HepG2 (cell line): ENCODE measurements at regions of chr2 and their contacts with region 1.

Region 1: DNA sequence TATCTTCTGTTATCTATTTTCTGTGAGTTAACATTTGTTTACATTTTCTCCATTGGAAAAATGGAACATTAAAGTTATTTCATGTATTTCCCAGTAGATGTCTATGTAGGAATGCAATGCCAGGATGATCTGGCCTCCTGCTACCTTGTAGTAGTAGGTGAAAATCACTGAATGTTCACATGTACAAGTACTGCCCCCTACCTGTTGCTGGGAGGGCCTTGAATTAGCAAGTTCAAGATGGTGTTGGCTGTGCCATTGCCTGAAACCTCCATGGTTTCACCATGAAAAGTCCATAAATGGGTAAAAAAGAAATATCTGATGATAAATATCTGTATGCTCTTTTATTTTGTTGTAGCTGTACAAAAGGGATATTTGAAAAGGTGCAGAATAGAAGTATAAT is 30.7 kb downstream of the XRCC5 start:
- DNase-seq: peak; percentile 61
- ATAC-seq: peak; percentile 89
- H3K4me3 ChIP-seq: no peak overlapping the region
- H3K27ac ChIP-seq: no peak overlapping the region
- H3K4me1 ChIP-seq: no peaks in the 10 kb centered on the region
- H3K27me3 ChIP-seq: no peaks in the 10 kb centered on the region
- CTCF ChIP-seq: peak; percentile 70
- EP300 ChIP-seq: no peak
- POLR2A ChIP-seq: no peak
- RAD21 ChIP-seq: peak; percentile 54; the same call in 1 of the 2 replicates

Region 2: GRCh38 chr2:216034065-216034464 is 105.8 kb before region 1 on chr2:
- CTCF ChIA-PET with region 1: interaction called, 7 read pairs
- POLR2A ChIA-PET with region 1: interaction called, 4 read pairs
- in situ Hi-C with region 1: no loop called
- intact Hi-C with region 1: loop called (anchors 1 kb)
- DNase-seq: peak; percentile 67
- ATAC-seq: peak; percentile 82
- H3K4me3 ChIP-seq: no peak overlapping the region
- H3K27ac ChIP-seq: no peak overlapping the region
- H3K4me1 ChIP-seq: no peaks in the 10 kb centered on the region
- H3K27me3 ChIP-seq: no peaks in the 10 kb centered on the region
- CTCF ChIP-seq: peak; percentile 86
- EP300 ChIP-seq: no peak
- POLR2A ChIP-seq: no peak
- RAD21 ChIP-seq: peak; percentile 41; the same call in 1 of the 2 replicates

Region 3: DNA sequence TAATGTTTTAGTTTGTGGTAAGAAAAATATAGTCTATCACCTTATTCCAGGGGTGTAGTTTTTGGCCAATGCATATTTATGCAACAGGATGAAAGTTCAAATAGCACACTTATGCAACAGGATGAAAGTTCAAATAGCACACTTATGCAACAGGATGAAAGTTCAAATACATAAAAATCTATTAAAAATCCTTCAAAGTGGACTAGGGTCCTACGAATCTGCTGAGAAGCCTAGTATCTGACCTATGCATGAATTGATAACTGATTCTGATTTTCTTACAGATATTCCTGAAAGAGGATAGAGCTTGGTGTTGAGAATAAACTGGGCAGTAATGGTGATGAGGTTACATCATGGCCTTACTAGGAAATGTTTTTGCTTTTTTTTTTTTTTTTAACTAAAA is 61.1 kb before region 1 on chr2:
- CTCF ChIA-PET with region 1: no interaction called
- POLR2A ChIA-PET with region 1: no interaction called
- in situ Hi-C with region 1: no loop called
- intact Hi-C with region 1: no loop called
- DNase-seq: peak; percentile 64
- ATAC-seq: no peak
- H3K4me3 ChIP-seq: peak overlapping the region; percentile 4 to 41 (median 13); a peak in 1 of 6 replicates
- H3K27ac ChIP-seq: peak overlapping the region; percentile 70
- H3K4me1 ChIP-seq: peaks cover 85% of the 10 kb centered on the region
- H3K27me3 ChIP-seq: no peaks in the 10 kb centered on the region; a peak in 1 of 5 replicates
- CTCF ChIP-seq: no peak
- EP300 ChIP-seq: peak; percentile 97
- POLR2A ChIP-seq: peak in 1 of 2 experiments; percentile 45; a peak in 1 of 4 replicates
- RAD21 ChIP-seq: peak; percentile 52; the same call in 1 of the 2 replicates

Region 4: DNA sequence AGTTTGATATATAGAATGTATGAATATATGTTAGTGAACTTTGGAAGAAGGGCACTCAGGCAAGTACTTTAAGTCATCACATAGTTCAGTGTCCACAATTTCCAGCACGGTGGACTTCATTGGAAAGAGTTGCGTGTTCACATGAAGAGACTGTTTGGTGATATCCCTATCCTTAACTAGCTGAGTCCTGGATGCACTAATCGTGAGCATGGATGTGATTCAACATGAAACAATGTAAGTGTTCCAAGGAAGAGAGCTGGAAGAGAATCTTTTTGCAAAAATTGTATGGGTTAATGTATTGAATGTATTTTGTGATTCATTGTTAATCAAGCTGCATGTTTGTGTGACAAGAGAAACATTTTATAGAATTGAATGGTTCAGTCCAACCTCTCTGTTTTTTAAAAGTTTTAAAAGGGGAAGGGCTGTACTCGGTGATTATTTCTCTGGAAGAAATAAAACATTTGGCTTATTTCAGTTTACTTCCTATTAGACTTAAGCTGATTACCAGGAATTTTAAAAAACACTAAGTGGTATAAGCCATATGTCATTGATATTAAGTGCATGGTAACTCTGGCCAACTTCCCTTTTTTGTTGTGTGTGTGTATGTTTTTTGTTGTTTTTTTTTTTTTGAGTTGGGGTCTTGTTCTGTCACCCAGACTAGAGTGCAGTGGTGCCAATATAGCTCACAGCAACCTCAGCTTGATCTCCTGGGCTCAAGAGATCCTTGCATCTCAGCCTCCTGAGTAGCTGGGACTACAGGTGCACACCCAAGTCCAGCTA is 22.1 kb before region 1 on chr2:
- CTCF ChIA-PET with region 1: no interaction called
- POLR2A ChIA-PET with region 1: no interaction called
- in situ Hi-C with region 1: no loop called
- intact Hi-C with region 1: no loop called
- DNase-seq: no peak
- ATAC-seq: no peak
- H3K4me3 ChIP-seq: no peak overlapping the region
- H3K27ac ChIP-seq: no peak overlapping the region
- H3K4me1 ChIP-seq: peaks cover 42% of the 10 kb centered on the region
- H3K27me3 ChIP-seq: no peaks in the 10 kb centered on the region; a peak in 1 of 5 replicates
- CTCF ChIP-seq: no peak
- EP300 ChIP-seq: no peak
- POLR2A ChIP-seq: no peak
- RAD21 ChIP-seq: no peak

Region 5: GRCh38 chr2:216287251-216287650 is 147.4 kb after region 1 on chr2:
- CTCF ChIA-PET with region 1: no interaction called
- POLR2A ChIA-PET with region 1: no interaction called
- in situ Hi-C with region 1: no loop called
- intact Hi-C with region 1: no loop called
- DNase-seq: peak; percentile 67
- ATAC-seq: peak; percentile 79
- H3K4me3 ChIP-seq: no peak overlapping the region
- H3K27ac ChIP-seq: no peak overlapping the region
- H3K4me1 ChIP-seq: peaks cover 19% of the 10 kb centered on the region
- H3K27me3 ChIP-seq: peaks cover 0 to 8% of the 10 kb centered on the region in 2 experiments; a peak in 1 of 5 replicates
- CTCF ChIP-seq: no peak
- EP300 ChIP-seq: no peak
- POLR2A ChIP-seq: no peak
- RAD21 ChIP-seq: no peak

Region 6: DNA sequence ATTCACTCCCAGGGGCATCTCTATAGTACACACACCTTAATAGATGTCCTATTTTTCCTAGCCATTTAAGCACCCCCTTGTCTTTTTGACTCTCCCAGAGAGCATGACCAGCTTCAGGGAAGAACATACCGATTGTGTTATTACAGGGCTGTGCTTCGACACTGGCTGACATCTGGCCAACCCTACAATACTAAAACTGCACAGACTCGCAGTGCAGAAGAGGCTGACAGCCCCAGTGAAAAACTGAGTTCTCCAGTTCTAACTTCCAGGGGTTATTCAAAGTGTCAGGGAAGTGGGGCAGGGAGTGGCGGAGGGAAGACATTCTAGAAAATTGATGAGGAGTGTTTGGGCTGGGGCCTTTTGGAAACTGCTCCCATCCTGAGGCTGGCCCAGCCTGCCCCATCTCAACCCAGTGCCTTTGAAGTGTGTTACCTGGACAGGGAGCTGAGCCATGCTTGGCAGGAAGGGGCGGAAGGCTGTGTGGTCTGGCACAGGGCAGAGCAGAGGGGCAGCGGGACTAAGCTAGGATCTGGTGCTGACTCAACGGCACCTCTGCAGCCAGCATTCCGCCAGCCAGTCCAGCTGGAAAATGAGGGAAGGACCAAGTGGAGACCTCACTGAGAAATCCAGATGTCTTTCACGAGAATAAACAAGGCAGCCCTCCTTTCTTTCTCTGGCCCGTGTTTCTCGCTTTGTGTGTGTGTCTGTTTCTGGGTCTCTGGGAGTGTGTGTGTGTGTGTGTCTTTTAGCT is 570.8 kb after region 1 on chr2:
- CTCF ChIA-PET with region 1: no interaction called
- POLR2A ChIA-PET with region 1: no interaction called
- in situ Hi-C with region 1: no loop called
- intact Hi-C with region 1: no loop called
- DNase-seq: no peak
- ATAC-seq: no peak
- H3K4me3 ChIP-seq: no peak overlapping the region
- H3K27ac ChIP-seq: no peak overlapping the region
- H3K4me1 ChIP-seq: no peaks in the 10 kb centered on the region
- H3K27me3 ChIP-seq: peaks cover 2 to 32% of the 10 kb centered on the region in 2 experiments; a peak in 4 of 5 replicates
- CTCF ChIP-seq: no peak
- EP300 ChIP-seq: no peak
- POLR2A ChIP-seq: no peak
- RAD21 ChIP-seq: no peak